Activated T-helper 1 cell treated with anti-CD3 and anti-CD28 coated beads, Interleukin-12 subunit alpha, Interleukin-12 subunit beta, Interleukin-2, Interleukin-4 antibody, amounts not matched to agents 30 ng/mL and 10 ng/mL and 1 ng/mL, durations not matched to agents 14 hours and 24 hours and 36 hours (primary cell): ENCODE measurements at regions of chr17 and their contacts with region 1.

Region 1: DNA sequence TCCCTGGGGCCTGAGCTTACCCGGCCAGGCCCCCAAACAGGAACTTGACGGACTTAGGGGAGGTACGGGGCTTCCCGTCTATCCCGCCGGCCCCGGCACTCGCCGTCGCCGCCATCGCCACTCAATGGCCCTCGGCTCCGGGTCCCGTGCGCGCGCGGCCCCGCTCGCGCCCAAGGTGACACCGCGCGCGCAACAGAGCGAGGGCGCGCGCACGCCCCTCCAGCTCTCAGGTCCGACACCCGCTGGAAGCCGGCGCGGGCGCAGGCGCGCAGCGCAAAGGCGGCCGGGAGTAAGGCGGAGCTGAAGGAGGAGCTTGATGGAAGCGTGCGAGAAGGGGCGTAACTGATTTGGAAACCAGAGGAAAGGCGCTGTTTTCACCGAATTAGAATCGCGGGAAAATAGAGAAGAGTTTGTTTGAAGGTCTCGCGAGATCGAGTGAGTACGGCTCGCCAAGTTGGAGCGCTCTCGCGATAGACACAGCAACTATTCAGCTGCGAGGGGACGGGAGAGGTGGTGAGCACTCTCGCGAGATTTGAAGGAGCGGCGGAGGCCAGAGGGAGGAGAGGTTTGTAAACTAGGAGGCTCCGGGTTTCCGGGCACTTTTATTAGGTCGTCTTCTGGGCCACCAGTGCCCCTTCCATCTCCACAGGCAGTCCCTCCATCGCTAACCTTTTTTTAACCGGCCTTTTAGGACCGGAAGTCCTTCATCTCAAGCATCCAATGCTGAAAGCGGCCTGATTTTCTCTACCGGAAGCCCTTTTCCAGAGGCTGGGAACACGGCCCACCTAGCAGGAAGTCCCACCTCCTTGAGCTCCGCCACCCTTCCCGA is at the starts of genes RNF167 and SLC25A11:
- DNase-seq: peak; percentile 98
- H3K4me3 Mint-ChIP-seq: peak within 1 kb of the TSS; percentile 100
- H3K27ac Mint-ChIP-seq: peak within 1 kb of the TSS; percentile 94
- H3K4me1 Mint-ChIP-seq: peaks cover 56% of the 10 kb centered on the region
- H3K27me3 Mint-ChIP-seq: no peaks in the 10 kb centered on the region
- total RNA-seq, gene RNF167: 138 and 140 TPM in 2 replicates
- total RNA-seq, gene SLC25A11: 111 and 116 TPM in 2 replicates

Region 2: GRCh38 chr17:4903051-4903818 is 36.8 kb before region 1 on chr17 and contains the start of gene CHRNE:
- intact Hi-C with region 1: loop called (anchors 1 kb)
- DNase-seq: peak; percentile 61
- H3K4me3 Mint-ChIP-seq: peak within 1 kb of the TSS; percentile 21
- H3K27ac Mint-ChIP-seq: peak within 1 kb of the TSS; percentile 52
- H3K4me1 Mint-ChIP-seq: peaks cover 25% of the 10 kb centered on the region
- H3K27me3 Mint-ChIP-seq: peaks cover 16% of the 10 kb centered on the region
- total RNA-seq, gene CHRNE: 0.52 and 0.61 TPM in 2 replicates

Region 3: DNA sequence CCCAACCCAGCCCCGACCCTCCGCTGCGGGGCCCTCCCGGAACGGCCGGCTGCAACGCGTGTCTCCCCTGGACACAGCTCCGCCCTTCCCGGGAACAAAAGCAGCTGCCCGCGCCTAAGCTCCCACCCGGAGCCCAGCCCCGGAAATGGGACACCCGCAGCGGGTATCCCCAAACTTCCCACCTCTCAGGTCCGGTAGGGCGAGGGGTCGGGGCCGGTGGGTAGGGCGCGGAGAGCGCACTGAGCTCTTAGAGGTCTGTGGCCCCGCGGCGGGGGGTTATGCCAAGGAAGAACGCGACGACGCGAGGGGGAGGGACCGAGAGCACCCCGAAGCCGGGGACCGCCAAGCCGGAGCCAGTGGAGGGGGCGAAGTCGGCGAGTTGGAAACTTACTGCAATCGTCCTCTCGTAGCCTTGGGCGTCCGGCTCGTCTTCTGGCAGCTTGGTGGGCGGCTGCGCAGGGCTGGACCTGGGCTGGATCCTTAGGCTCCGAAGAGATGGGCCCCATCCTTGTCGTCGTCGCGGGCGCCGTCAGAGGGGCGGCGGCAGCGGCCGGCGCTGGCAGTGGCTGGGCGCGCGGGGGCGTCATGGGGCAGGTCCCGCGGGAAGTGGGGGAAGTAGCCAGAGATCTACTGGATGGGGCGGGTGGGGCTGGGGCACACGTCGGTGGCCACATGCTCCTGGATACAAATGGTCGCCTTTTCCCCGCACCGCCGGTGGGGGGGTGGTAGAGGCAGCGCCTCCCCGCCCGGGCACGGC is 182.8 kb after region 1 on chr17:
- intact Hi-C with region 1: no loop called
- DNase-seq: no peak
- H3K4me3 Mint-ChIP-seq: no peak overlapping the region
- H3K27ac Mint-ChIP-seq: no peak overlapping the region
- H3K4me1 Mint-ChIP-seq: no peaks in the 10 kb centered on the region
- H3K27me3 Mint-ChIP-seq: peaks cover 24% of the 10 kb centered on the region